ENCODE measurements at regions of chr20 and their contacts with region 1.

Region 1: GRCh38 chr20:41173161-41173721 is 35.9 kb downstream of the PLCG1 start:
- DNase-seq: peak; percentile 51
- H3K4me3 ChIP-seq: no peak overlapping the region
- H3K27ac ChIP-seq: no peak overlapping the region
- H3K4me1 ChIP-seq: peaks cover 74% of the 10 kb centered on the region
- H3K27me3 ChIP-seq: no peaks in the 10 kb centered on the region
- CTCF ChIP-seq: peak; percentile 94 to 99

Region 2: GRCh38 chr20:40970201-40970600 is 203.0 kb before region 1 on chr20:
- CTCF ChIA-PET with region 1: no interaction called
- dilution Hi-C with region 1: no loop called
- in situ Hi-C with region 1: no loop called
- intact Hi-C with region 1: loop called (anchors 1 kb)
- DNase-seq: no peak
- H3K4me3 ChIP-seq: no peak overlapping the region
- H3K27ac ChIP-seq: no peak overlapping the region
- H3K4me1 ChIP-seq: peaks cover 8% of the 10 kb centered on the region
- H3K27me3 ChIP-seq: no peaks in the 10 kb centered on the region
- CTCF ChIP-seq: peak in 1 of 2 donors; percentile 41

Region 3: DNA sequence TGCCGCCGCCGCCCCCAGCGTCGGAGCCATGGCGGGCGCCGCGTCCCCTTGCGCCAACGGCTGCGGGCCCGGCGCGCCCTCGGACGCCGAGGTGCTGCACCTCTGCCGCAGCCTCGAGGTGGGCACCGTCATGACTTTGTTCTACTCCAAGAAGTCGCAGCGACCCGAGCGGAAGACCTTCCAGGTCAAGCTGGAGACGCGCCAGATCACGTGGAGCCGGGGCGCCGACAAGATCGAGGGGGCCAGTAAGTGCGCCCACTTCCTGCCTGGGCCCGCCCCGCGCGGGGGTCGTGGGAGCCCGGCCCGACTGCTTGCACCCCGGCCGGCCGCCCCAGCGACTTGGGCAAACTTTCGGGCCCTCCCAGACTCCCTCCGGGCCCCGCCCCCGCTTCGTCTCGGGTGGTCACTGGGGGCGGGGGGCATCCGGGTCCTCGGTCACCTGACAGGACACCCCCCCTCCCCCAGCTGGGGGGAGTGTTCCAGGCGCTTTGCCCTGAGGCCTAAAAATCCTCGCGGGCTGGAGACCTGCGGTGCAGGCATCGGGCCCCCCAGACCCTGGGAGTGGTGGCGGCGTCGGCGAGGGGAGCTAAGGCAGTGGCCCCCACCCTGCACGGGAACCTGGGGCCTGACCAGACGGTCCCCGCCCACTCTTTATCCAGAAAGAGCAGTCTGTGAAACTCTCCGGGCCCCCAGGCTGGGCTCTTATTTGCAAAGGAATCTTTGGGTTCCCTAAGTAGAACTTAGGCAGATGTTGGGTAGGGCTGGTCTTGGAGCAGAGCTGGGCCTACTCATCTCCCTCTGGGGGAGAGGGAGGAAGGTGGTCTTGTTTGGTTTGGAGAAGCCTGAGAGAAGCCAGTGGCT is 35.4 kb before region 1 on chr20:
- CTCF ChIA-PET with region 1: interaction called, 4 read pairs
- dilution Hi-C with region 1: no loop called
- in situ Hi-C with region 1: no loop called
- intact Hi-C with region 1: loop called (anchors 1 kb)
- DNase-seq: peak; percentile 28
- H3K4me3 ChIP-seq: peak overlapping the region; percentile 60 to 83 (median 71)
- H3K27ac ChIP-seq: peak overlapping the region; percentile 55
- H3K4me1 ChIP-seq: peaks cover 56% of the 10 kb centered on the region
- H3K27me3 ChIP-seq: no peaks in the 10 kb centered on the region
- CTCF ChIP-seq: no peak

Region 4: DNA sequence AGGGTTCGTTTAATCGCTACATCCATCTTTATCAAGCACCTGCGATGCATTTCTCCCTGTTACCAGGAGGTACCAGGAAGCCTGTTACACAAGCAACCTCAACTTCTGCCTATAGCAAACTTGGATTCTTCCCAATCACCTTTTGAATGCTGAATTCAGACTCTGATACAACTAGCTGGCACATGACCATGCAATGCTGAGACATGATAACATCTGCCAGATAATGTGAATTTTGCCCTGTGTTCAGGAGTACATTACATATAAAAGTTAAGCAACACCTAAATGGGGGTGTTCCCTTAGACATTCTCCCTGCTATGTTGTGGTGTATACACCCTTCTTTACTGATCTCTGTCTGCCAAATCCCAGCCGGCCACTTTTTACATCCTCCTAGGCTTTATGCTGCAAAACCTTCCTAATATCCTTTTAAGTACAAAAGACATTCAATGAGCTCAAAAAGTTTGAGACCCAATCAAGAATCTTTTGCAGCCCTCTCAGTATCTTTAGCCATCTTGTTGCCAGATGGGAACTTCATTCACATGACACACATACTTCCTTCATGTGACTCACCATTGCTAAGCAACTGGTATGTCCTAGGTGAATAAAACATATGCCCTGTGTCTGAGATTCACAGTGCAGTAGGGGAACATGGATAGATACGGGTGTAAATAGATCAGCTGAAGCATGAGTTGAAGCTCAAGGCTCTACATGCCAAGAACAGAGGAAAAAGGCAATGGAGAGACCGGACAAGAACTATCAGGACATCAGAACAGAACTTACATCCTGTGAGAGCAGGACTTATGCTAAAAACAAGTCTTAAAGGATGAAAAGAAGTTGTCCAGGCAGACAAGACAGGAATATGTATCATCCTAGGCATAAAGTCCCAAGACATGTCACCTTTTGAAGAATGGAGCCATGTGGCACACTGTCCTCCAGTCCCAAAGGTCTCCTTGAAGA is 60.0 kb after region 1 on chr20:
- CTCF ChIA-PET with region 1: interaction called, 6 read pairs
- dilution Hi-C with region 1: no loop called
- in situ Hi-C with region 1: loop called (anchors 5 to 10 kb)
- intact Hi-C with region 1: loop called (anchors 1 kb)
- DNase-seq: peak; percentile 80
- H3K4me3 ChIP-seq: no peak overlapping the region
- H3K27ac ChIP-seq: peak overlapping the region; percentile 98
- H3K4me1 ChIP-seq: peaks cover 35% of the 10 kb centered on the region
- H3K27me3 ChIP-seq: no peaks in the 10 kb centered on the region
- CTCF ChIP-seq: no peak

Region 5: GRCh38 chr20:41329435-41330342 is 156.4 kb after region 1 on chr20:
- CTCF ChIA-PET with region 1: no interaction called
- dilution Hi-C with region 1: no loop called
- in situ Hi-C with region 1: loop called in 1 of 2 experiments (anchors 5 kb)
- intact Hi-C with region 1: no loop called
- DNase-seq: peak; percentile 95
- H3K4me3 ChIP-seq: no peak overlapping the region
- H3K27ac ChIP-seq: peak overlapping the region; percentile 71
- H3K4me1 ChIP-seq: peaks cover 22% of the 10 kb centered on the region
- H3K27me3 ChIP-seq: no peaks in the 10 kb centered on the region
- CTCF ChIP-seq: no peak

Region 6: GRCh38 chr20:41411391-41411847 is 238.2 kb after region 1 on chr20:
- CTCF ChIA-PET with region 1: no interaction called
- dilution Hi-C with region 1: no loop called
- in situ Hi-C with region 1: no loop called
- intact Hi-C with region 1: loop called (anchors 5 kb)
- DNase-seq: peak; percentile 5
- H3K4me3 ChIP-seq: no peak overlapping the region
- H3K27ac ChIP-seq: no peak overlapping the region
- H3K4me1 ChIP-seq: no peaks in the 10 kb centered on the region
- H3K27me3 ChIP-seq: no peaks in the 10 kb centered on the region
- CTCF ChIP-seq: peak; percentile 26 to 39

Region 7: DNA sequence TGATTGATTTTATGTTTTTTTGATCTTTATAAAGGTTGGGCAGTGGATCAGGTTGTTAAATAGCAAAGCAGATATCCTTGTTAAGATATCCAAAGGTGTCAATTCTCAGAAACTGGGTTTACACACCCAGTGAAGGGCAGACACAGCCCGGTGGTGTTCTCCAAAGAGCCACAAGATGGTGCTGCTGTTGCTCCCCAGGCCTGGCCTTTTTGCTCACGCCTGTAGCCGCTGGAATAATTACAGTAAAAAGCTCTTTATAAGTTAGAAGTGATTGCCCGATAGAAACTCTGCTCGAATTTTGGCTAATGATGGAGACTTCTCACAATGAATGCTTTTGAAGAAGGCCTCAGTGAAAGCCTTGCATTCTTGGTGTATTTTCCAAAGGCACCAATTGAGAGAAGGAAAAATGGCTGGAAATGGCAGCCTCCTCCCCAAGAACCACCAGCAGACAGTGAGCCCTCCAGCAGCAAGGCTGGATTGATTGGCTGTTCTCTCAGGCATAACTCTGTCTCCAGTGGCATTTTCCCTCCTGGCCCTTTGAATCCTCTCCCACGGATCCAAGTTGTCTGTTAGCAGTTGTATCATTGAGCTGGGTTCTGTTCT is 565.5 kb after region 1 on chr20:
- CTCF ChIA-PET with region 1: no interaction called
- dilution Hi-C with region 1: no loop called
- in situ Hi-C with region 1: no loop called
- intact Hi-C with region 1: loop called (anchors 10 kb)
- DNase-seq: peak; percentile 11
- H3K4me3 ChIP-seq: no peak overlapping the region
- H3K27ac ChIP-seq: no peak overlapping the region
- H3K4me1 ChIP-seq: no peaks in the 10 kb centered on the region
- H3K27me3 ChIP-seq: no peaks in the 10 kb centered on the region
- CTCF ChIP-seq: peak; percentile 80 to 93

Region 8: GRCh38 chr20:41938353-41938752 is 765.1 kb after region 1 on chr20:
- CTCF ChIA-PET with region 1: no interaction called
- dilution Hi-C with region 1: no loop called
- in situ Hi-C with region 1: no loop called
- intact Hi-C with region 1: no loop called
- DNase-seq: no peak
- H3K4me3 ChIP-seq: no peak overlapping the region
- H3K27ac ChIP-seq: no peak overlapping the region
- H3K4me1 ChIP-seq: no peaks in the 10 kb centered on the region
- H3K27me3 ChIP-seq: no peaks in the 10 kb centered on the region
- CTCF ChIP-seq: no peak

Measured in mammary epithelial cell (primary cell).